CD14-positive monocyte (primary cell): ENCODE measurements at regions of chr1 and their contacts with region 1.

Region 1: GRCh38 chr1:159214149-159214760 is 9.6 kb downstream of the ACKR1 start:
- DNase-seq: peak; percentile 31 to 49 (median 46)
- H3K4me3 ChIP-seq: no peak overlapping the region
- H3K4me3 Mint-ChIP-seq: no peak overlapping the region
- H3K27ac ChIP-seq: no peak overlapping the region
- H3K27ac Mint-ChIP-seq: no peak overlapping the region
- H3K4me1 ChIP-seq: no peaks in the 10 kb centered on the region
- H3K4me1 Mint-ChIP-seq: peaks cover 2% of the 10 kb centered on the region
- H3K27me3 ChIP-seq: no peaks in the 10 kb centered on the region
- H3K27me3 Mint-ChIP-seq: peaks cover 6 to 12% (median 11%) of the 10 kb centered on the region in 3 donors
- CTCF ChIP-seq: peak; percentile 98

Region 2: DNA sequence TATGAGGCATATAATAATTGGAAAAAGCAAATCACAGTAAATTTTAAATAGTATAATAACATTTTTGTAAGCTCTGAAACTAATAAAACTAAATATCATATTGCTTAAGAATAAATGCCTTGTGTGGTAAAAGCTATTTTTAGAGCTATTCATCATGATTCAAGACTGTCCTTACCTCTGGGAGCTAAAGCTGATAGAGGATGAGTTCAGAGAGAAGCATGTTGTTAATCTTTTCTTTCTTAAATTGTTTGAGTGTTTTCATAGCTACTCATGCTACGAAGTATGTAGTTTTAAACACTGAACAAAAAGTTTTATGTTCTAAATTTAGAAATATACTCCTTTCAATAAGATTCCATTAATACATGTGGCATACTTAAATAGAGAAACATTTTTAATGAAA is 174.0 kb before region 1 on chr1:
- intact Hi-C with region 1: no loop called
- DNase-seq: no peak
- H3K4me3 ChIP-seq: no peak overlapping the region
- H3K4me3 Mint-ChIP-seq: no peak overlapping the region
- H3K27ac ChIP-seq: no peak overlapping the region
- H3K27ac Mint-ChIP-seq: no peak overlapping the region
- H3K4me1 ChIP-seq: no peaks in the 10 kb centered on the region
- H3K4me1 Mint-ChIP-seq: no peaks in the 10 kb centered on the region
- H3K27me3 ChIP-seq: no peaks in the 10 kb centered on the region
- H3K27me3 Mint-ChIP-seq: peaks cover 0 to 2% (median 0%) of the 10 kb centered on the region in 3 donors
- CTCF ChIP-seq: no peak

Region 3: GRCh38 chr1:159132271-159132881 is 81.9 kb before region 1 on chr1:
- intact Hi-C with region 1: loop called (anchors 2 to 5 kb)
- DNase-seq: peak; percentile 56 to 66 (median 57)
- H3K4me3 ChIP-seq: no peak overlapping the region
- H3K4me3 Mint-ChIP-seq: no peak overlapping the region
- H3K27ac ChIP-seq: no peak overlapping the region
- H3K27ac Mint-ChIP-seq: no peak overlapping the region
- H3K4me1 ChIP-seq: no peaks in the 10 kb centered on the region
- H3K4me1 Mint-ChIP-seq: peaks cover 2% of the 10 kb centered on the region
- H3K27me3 ChIP-seq: no peaks in the 10 kb centered on the region
- H3K27me3 Mint-ChIP-seq: peaks cover 0 to 3% (median 0%) of the 10 kb centered on the region in 3 donors
- CTCF ChIP-seq: peak; percentile 89

Region 4: DNA sequence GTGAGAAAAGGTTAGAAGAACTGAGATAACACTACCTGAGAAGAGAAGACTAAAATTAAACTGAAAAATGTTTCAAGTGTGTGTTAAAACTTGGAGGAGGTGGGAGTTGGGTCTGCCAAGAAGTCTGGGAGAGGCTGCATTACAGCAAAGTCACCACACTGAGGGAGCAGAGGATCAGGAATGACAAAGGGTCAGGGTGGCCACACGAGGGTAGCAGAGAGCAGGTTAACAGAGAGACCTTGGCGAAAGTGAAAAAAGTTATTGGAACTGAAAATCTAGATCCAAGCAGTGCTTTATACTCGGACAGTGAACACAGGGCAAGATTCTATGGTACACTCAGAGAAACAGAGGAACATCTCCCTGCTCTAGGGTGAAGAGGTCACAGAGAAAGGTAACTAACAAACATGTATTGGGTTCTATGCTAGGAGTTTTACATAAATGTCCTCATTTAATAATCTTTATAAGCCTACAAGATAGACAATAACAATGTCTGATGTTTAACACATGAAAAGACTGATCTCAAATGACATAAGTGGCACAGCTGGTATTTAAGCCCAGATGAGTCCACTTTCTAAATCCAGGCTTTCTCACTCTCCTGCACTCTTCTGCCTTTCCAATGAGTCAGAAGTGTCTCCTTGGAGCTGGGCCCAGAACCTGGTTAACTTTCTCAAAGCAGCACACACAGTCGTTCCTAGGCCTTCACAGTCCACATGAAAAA is 53.1 kb before region 1 on chr1:
- intact Hi-C with region 1: loop called in 1 of 2 experiments (anchors 5 kb)
- DNase-seq: peak; percentile 55 to 72 (median 69)
- H3K4me3 ChIP-seq: no peak overlapping the region
- H3K4me3 Mint-ChIP-seq: no peak overlapping the region
- H3K27ac ChIP-seq: no peak overlapping the region
- H3K27ac Mint-ChIP-seq: no peak overlapping the region
- H3K4me1 ChIP-seq: peaks cover 0 to 3% of the 10 kb centered on the region in 2 donors
- H3K4me1 Mint-ChIP-seq: peaks cover 10% of the 10 kb centered on the region
- H3K27me3 ChIP-seq: peaks cover 12 to 25% of the 10 kb centered on the region in 2 donors
- H3K27me3 Mint-ChIP-seq: peaks cover 6 to 24% (median 12%) of the 10 kb centered on the region in 3 donors
- CTCF ChIP-seq: peak; percentile 98

Region 5: DNA sequence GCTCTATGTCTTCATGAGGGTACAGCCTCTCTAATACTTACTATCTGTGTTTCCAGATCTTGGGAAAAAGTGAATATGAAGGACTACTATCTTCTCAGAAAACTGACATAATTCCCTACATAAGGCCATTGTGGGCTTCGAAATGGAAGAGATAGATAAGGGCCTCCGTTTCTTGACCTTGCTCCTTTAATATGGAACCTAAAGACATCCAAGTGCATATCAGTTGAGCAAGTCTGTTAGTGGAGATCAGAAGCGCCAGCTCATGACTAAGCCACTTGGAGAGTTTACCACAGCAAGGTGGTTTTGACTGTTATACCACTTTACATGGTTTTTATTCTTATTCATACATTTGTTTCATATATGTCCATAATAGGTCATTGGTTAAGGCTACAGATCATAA is 52.6 kb after region 1 on chr1:
- intact Hi-C with region 1: no loop called
- DNase-seq: no peak
- H3K4me3 ChIP-seq: no peak overlapping the region
- H3K4me3 Mint-ChIP-seq: no peak overlapping the region
- H3K27ac ChIP-seq: no peak overlapping the region
- H3K27ac Mint-ChIP-seq: no peak overlapping the region
- H3K4me1 ChIP-seq: no peaks in the 10 kb centered on the region
- H3K4me1 Mint-ChIP-seq: no peaks in the 10 kb centered on the region
- H3K27me3 ChIP-seq: no peaks in the 10 kb centered on the region
- H3K27me3 Mint-ChIP-seq: peaks cover 0 to 2% (median 0%) of the 10 kb centered on the region in 3 donors
- CTCF ChIP-seq: no peak

Region 6: DNA sequence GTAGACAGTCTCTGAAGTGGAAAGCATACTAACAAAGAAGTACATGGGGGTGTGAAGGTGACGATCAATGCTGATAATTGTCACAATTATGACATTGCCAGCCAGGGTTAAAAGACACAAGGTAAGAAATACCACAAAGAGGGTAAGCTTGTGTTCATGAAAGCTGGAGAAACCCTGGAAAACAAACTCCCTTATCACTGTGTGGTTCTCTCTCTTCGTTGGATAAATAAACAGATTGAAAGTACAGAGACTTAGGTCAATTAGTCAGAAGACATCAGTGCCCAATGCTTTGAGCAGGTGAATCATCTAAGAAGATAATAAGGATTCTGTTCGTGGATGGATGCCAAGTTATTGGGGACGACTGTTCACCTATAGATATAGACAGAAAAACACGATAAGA is 65.5 kb after region 1 on chr1:
- intact Hi-C with region 1: no loop called
- DNase-seq: no peak
- H3K4me3 ChIP-seq: no peak overlapping the region
- H3K4me3 Mint-ChIP-seq: no peak overlapping the region
- H3K27ac ChIP-seq: no peak overlapping the region
- H3K27ac Mint-ChIP-seq: no peak overlapping the region
- H3K4me1 ChIP-seq: peaks cover 22 to 31% of the 10 kb centered on the region in 2 donors
- H3K4me1 Mint-ChIP-seq: peaks cover 33% of the 10 kb centered on the region
- H3K27me3 ChIP-seq: no peaks in the 10 kb centered on the region
- H3K27me3 Mint-ChIP-seq: no peaks in the 10 kb centered on the region
- CTCF ChIP-seq: no peak